ENCODE measurements at regions of chr22 and their contacts with region 1.

Region 1: DNA sequence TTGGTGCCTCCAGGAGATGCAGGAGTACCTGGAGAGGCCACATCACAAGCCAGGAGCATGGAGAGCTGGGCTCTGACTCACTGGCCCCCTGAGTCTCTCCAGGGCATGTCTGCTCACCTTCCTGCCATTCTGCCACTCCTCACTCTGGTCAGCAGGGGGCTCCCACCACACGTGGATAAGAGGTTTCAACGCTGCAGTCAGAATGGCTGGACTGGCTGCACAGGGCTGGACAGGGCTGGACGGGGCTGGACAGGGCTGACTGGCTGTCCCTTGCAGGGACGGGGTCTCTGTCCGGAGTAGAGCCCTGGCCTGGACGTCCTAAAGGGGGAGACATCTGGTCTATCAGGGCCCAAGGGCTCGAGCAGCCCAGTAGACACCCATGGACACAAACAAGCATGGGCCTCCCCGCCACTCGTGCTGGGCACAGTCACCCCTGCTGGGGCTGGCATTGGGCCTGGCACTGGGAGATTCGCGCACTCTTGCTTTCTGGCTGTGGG is 34.6 kb downstream of the CYTH4 start:
- DNase-seq: peak; percentile 92

Region 2: GRCh38 chr22:37428649-37429586 is 112.0 kb after region 1 on chr22:
- CTCF ChIA-PET with region 1: interaction called, 17 read pairs
- POLR2A ChIA-PET with region 1: no interaction called
- DNase-seq: peak; percentile 83

Region 3: DNA sequence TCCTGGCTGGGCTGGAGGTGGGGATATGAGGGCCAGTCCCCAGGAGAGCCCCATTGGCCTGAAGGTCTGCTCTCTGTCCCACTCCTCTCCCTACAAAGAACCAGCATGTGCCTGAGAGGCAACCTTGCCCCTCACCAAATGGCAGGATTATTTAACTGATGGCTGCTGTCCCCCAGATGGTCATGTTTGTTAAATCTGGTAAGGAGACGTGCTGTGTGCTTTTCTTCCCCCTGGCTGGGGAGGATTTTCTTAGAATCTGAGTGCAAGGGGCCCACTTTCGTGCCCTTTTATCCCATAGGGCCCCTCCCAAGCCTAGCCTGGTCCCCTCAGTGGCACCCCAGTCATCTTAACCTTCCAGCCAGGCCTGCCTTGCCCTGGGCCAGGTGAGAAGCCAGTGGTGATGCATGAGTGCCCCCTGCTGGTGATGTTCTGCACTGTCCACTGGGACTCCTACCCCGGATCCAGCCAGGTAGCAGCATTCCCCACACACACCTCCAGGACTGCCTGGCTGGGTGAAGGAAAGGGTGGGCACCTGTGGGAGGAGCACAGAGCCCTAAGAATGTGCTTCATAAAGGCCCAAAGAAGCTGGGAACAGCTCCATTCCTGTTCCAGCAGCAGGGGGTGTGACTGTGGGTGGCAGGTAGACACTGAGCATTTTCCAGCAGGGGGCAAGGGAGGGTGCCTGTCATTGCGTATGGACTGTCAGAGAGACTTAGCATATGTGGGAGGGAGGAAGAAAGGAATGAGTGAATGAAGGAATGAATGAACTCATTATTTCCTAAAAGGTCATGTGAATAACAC is 140.4 kb after region 1 on chr22:
- CTCF ChIA-PET with region 1: interaction called, 46 read pairs
- POLR2A ChIA-PET with region 1: interaction called, 3 read pairs
- DNase-seq: peak; percentile 93

Measured in HEK293T (cell line).